ENCODE measurements at regions of chr3 and their contacts with region 1.

Region 1: GRCh38 chr3:8501371-8502131 is at the start of gene LMCD1:
- DNase-seq: peak; percentile 64
- ATAC-seq: peak; percentile 95
- H3K4me3 ChIP-seq: peak within 1 kb of the TSS; percentile 51; the same call in 1 of the 2 replicates
- H3K27ac ChIP-seq: peak within 1 kb of the TSS; percentile 51
- H3K4me1 ChIP-seq: peaks cover 18% of the 10 kb centered on the region
- H3K27me3 ChIP-seq: peaks cover 0 to 2% of the 10 kb centered on the region in 2 experiments; a peak in 1 of 4 replicates
- CTCF ChIP-seq: no peak
- EP300 ChIP-seq: no peak
- POLR2A ChIP-seq: no peak
- RAD21 ChIP-seq: no peak
- polyA plus RNA-seq, gene LMCD1: 0.27 to 0.35 TPM

Region 2: DNA sequence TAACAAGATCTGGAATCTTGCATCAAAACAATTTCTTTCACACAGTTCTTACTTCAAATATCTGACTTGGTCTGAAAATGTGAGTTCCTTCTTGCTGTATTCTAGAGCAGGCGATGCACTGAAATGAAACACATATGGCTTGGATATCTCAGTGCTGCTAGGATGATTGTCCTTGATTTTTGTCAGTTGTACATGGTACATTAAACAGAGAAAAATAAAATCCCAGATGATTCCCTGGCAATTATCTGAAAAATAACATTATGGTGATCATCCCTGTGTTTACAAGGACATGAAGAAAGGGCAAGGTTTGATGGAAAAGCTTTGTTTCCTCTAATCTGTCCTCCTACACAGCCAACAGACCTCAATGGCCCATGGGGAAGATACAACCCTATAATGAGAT is 10.7 kb after region 1 on chr3:
- CTCF ChIA-PET with region 1: interaction called, 5 read pairs
- POLR2A ChIA-PET with region 1: interaction called, 5 read pairs
- RAD21 ChIA-PET with region 1: interaction called, 6 read pairs
- SMC1A ChIA-PET with region 1: interaction called, 16 read pairs
- in situ Hi-C with region 1: no loop called
- intact Hi-C with region 1: no loop called
- DNase-seq: no peak
- ATAC-seq: no peak
- H3K4me3 ChIP-seq: no peak overlapping the region
- H3K27ac ChIP-seq: no peak overlapping the region
- H3K4me1 ChIP-seq: no peaks in the 10 kb centered on the region; the same call in 1 of the 2 replicates
- H3K27me3 ChIP-seq: no peaks in the 10 kb centered on the region
- CTCF ChIP-seq: no peak
- EP300 ChIP-seq: no peak
- POLR2A ChIP-seq: no peak
- RAD21 ChIP-seq: no peak

Region 3: GRCh38 chr3:8524249-8524648 is 22.7 kb after region 1 on chr3:
- CTCF ChIA-PET with region 1: interaction called, 4 read pairs
- POLR2A ChIA-PET with region 1: interaction called, 8 read pairs
- RAD21 ChIA-PET with region 1: interaction called, 6 read pairs
- SMC1A ChIA-PET with region 1: interaction called, 16 read pairs
- in situ Hi-C with region 1: no loop called
- intact Hi-C with region 1: no loop called
- DNase-seq: no peak
- ATAC-seq: peak; percentile 85
- H3K4me3 ChIP-seq: no peak overlapping the region
- H3K27ac ChIP-seq: no peak overlapping the region; the same call in 1 of the 2 replicates
- H3K4me1 ChIP-seq: no peaks in the 10 kb centered on the region
- H3K27me3 ChIP-seq: no peaks in the 10 kb centered on the region
- CTCF ChIP-seq: no peak
- EP300 ChIP-seq: no peak
- POLR2A ChIP-seq: no peak
- RAD21 ChIP-seq: no peak

Region 4: DNA sequence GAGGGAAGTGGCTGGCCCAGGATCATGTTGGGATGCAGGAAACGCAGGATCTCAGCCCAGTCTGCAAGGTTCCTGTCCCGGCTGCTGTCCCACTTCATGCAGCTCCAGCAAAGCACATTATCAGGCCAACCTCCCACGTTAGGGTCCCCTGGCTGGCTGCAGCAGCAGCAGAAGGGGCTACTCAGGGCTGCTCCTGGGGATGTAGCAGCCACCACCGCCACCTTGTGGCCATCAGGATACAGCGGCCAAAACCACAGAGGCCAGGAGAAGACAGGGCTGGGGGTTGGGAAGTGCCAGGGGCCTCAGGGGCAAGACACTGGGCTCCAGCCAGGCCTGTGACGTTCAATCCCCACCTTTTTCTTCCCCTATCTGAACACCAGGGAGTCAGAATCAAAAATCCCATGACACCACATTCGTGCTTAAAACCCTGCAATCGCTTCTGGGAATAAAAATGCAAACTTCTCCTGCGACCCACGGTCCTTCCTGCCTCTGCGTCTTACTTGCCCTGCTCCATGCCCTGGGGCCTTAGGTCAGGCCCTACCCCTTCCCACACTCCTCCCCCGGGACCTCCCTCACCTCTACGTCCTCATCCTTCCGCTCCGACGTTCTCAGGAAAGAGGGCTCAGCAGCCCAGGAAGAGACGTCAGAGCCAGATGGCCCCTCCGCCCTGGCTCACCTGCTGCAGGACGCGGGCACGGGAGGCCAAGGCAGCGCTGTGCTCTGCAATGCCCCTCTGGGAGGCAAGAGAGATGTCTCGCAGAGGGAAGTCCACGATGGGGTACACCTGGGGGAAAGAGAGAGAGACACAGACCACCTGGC is 121.5 kb after region 1 on chr3:
- CTCF ChIA-PET with region 1: no interaction called
- POLR2A ChIA-PET with region 1: no interaction called
- RAD21 ChIA-PET with region 1: no interaction called
- SMC1A ChIA-PET with region 1: no interaction called
- in situ Hi-C with region 1: no loop called
- intact Hi-C with region 1: loop called (anchors 2 kb)
- DNase-seq: no peak
- ATAC-seq: peak; percentile 98
- H3K4me3 ChIP-seq: no peak overlapping the region
- H3K27ac ChIP-seq: no peak overlapping the region
- H3K4me1 ChIP-seq: no peaks in the 10 kb centered on the region
- H3K27me3 ChIP-seq: no peaks in the 10 kb centered on the region
- CTCF ChIP-seq: peak; percentile 74 to 91 (median 90)
- EP300 ChIP-seq: no peak
- POLR2A ChIP-seq: no peak
- RAD21 ChIP-seq: peak; percentile 89